ENCODE measurements at regions of chr4 and their contacts with region 1.

Region 1: DNA sequence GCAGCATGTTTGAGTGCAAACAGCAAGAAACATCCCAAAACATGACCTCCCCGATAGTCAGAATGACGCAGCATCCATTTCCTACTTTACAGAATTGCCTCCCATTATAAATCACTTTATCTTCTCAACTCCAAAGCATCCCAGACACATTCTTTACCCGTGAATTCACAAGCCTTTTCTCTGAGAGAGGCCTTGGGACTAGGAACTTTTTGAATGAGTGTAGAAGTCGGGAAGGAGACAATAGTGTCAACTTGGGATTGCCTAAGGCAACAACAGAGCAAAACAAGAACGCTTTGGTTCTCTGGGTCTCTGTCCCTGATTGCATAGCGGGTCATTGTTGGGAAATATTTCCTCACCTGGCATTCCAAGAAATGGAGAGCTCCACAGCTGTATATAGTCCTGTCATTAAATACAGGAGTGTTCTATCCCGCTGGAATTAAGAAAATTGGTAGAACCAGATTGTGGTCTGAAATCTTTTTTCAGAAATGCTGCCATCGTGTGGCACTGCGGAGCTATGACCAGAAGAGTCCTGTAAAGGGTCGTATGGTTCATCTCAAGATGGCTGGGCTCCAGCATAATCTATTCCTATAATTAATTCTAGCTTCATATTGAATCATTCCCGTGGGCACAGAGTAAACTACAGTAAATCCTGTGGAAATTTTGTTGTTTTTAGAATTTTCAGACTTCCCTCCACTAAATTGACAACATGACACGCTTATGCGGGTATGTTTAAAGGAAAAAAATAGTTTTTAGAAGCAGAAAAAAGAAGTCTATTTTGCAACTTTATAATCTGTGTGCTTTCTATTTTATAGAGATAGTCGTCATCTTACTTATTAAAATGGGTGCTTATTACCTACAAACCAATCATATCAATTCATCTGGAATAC is 2.0 kb upstream of the SPP1 start:
- DNase-seq: peak; percentile 49
- H3K4me3 Mint-ChIP-seq: no peak overlapping the region
- H3K27ac Mint-ChIP-seq: no peak overlapping the region
- H3K4me1 Mint-ChIP-seq: peaks cover 8% of the 10 kb centered on the region
- H3K27me3 Mint-ChIP-seq: peaks cover 40% of the 10 kb centered on the region

Region 2: GRCh38 chr4:87848622-87849351 is 124.7 kb before region 1 on chr4:
- CTCF ChIA-PET with region 1: interaction called, 52 read pairs
- DNase-seq: peak; percentile 51
- H3K4me3 Mint-ChIP-seq: no peak overlapping the region
- H3K27ac Mint-ChIP-seq: no peak overlapping the region
- H3K4me1 Mint-ChIP-seq: peaks cover 11% of the 10 kb centered on the region
- H3K27me3 Mint-ChIP-seq: peaks cover 26% of the 10 kb centered on the region

Region 3: GRCh38 chr4:87939978-87940690 is 33.4 kb before region 1 on chr4:
- CTCF ChIA-PET with region 1: no interaction called
- DNase-seq: no peak
- H3K4me3 Mint-ChIP-seq: no peak overlapping the region
- H3K27ac Mint-ChIP-seq: no peak overlapping the region
- H3K4me1 Mint-ChIP-seq: no peaks in the 10 kb centered on the region
- H3K27me3 Mint-ChIP-seq: no peaks in the 10 kb centered on the region

Region 4: GRCh38 chr4:87962398-87962797 is 11.1 kb before region 1 on chr4:
- CTCF ChIA-PET with region 1: interaction called, 10 read pairs
- DNase-seq: no peak
- H3K4me3 Mint-ChIP-seq: no peak overlapping the region
- H3K27ac Mint-ChIP-seq: no peak overlapping the region
- H3K4me1 Mint-ChIP-seq: no peaks in the 10 kb centered on the region
- H3K27me3 Mint-ChIP-seq: peaks cover 13% of the 10 kb centered on the region